Heart left ventricle (tissue), 16 donors: ENCODE measurements at regions of chr22 and their contacts with region 1.

Region 1: GRCh38 chr22:37077884-37078485 is 26.4 kb downstream of the KCTD17 start:
- DNase-seq: peak in 3 of 5 donors; percentile 41 to 81 (median 55)
- ATAC-seq: peak in 2 of 4 donors; percentile 44 to 49
- H3K4me3 ChIP-seq: no peak overlapping the region
- H3K27ac ChIP-seq: no peak overlapping the region
- H3K4me1 ChIP-seq: peaks cover 0 to 28% (median 0%) of the 10 kb centered on the region in 12 donors
- H3K27me3 ChIP-seq: peaks cover 0 to 35% (median 7%) of the 10 kb centered on the region in 9 donors
- CTCF ChIP-seq: peak; percentile 77 to 99 (median 92)
- POLR2A ChIP-seq: no peak

Region 2: DNA sequence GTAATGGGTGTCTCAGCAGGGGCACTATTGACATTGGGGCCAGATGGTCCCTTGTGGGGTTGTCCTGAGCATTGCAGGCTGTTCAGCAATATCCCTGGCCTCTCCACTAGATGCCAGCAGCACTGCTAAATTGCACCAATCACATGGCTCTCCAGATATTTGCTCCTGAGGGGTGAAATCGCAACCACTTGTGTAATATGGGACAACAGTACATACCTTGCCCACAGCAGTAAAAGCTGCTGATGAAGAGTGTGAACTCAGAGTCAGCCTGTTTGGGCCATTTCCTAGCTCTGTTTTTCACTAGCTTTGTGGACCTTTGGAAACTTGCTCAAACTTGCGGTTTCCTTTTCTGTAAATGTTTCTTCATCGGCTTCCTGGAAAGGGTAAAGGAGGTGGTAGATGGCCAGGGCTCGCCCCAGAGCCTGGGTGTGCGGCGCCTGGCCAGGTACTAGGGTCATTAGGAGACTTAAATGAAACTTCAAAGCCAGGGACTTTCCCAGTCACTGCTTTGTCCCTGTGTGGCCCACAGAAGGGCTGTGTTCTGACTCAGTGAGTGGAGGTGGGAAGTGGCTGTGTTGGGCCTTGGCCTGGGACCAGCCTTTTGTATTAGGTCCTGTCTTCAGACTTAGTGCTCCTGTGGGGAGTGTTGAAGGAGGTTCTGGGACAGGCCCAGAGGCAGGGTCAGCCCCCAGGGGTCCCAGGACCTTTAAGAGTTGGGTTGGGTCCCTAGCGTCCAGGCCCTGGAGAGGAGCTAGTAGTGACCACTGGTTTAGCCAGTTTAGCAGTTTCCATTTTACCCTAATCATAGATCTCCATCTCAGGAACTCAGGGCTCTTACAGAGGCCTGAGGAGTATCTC is 204.1 kb before region 1 on chr22:
- intact Hi-C with region 1: no loop called
- DNase-seq: peak in 3 of 5 donors; percentile 30 to 44 (median 32)
- ATAC-seq: peak; percentile 78 to 87 (median 84)
- H3K4me3 ChIP-seq: peak overlapping the region in 1 of 12 donors; percentile 2
- H3K27ac ChIP-seq: peak overlapping the region in 11 of 12 donors; percentile 3 to 87 (median 50)
- H3K4me1 ChIP-seq: peaks cover 0 to 25% (median 11%) of the 10 kb centered on the region in 12 donors
- H3K27me3 ChIP-seq: peaks cover 0 to 28% (median 4%) of the 10 kb centered on the region in 9 donors
- CTCF ChIP-seq: peak; percentile 20 to 58 (median 46)
- POLR2A ChIP-seq: no peak

Region 3: DNA sequence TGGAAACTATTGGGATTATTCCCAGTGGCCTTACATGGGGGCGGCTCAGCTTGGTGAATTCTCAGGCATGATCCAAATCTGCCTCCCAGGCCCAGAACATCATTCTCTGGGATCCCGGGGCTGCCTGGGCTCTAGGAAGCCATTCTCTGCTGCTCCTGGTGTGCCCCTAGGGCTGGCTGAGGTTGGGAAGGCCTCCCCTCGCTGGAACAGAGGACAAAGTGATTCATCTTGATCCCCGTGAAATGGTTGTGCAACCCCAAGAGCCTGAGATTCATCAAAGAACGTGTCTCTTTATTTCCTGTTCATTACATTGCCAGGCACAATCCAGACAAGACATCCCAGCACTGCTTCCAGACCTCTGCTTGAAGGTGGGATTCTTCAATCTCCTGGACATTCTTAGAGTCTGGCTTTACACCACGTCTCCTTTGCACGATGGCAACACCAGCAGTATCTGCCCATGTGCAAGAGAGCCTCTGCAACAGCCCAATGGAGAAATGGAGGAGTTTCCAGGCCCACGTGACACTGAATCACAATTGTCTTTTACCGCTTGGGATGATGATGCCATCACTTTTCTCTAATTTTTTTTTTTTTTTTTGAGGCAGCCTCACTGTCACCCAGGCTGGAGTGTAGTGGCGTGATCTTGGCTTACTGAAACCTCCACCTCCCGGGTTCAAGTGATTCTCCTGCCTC is 111.0 kb before region 1 on chr22:
- intact Hi-C with region 1: no loop called
- DNase-seq: no peak
- ATAC-seq: no peak
- H3K4me3 ChIP-seq: no peak overlapping the region
- H3K27ac ChIP-seq: no peak overlapping the region
- H3K4me1 ChIP-seq: no peaks in the 10 kb centered on the region
- H3K27me3 ChIP-seq: peaks cover 0 to 8% (median 0%) of the 10 kb centered on the region in 9 donors
- CTCF ChIP-seq: no peak
- POLR2A ChIP-seq: no peak

Region 4: DNA sequence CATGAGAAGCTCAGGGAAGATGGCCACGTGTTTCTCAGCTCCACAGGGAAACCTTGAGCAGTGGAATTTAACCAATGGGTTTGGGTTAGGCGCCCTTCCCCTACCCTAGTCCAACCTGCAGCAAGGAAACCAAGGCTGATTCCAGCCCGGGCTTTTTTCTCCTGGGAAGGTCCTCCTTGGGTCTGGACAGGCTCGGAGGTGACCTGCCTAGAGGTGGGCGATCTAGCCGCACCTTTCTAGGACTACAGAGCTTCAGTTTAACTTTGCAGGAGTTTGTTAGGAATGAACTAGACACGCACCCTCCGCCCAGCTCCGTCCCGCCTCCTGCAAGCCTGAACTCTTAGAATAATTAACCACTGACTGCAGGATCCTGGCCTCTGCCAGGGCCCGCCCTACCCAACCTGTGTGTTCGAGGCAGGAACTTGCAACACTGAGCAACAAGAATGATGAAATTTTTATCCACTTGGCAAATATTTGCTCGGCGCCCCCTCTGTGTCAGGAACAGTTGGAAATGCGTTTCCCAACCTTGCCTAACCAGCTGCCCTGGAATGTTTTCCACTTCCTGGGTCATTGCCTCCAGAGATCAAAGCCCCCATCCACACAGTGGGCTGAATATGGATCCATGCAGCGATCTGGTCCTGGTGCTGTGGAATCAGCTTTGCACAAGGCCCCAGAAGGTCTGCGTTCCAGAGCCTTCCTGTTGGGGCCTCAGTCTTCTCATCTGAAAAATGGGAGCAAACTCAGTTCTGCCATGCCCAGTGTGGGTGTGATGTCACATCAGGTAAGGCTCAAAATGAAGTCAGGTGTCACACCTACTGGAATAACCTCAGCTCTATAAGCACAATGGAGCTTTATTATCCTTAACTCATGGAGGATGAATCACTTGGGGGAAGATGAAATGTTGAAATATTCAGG is 45.2 kb before region 1 on chr22:
- intact Hi-C with region 1: no loop called
- DNase-seq: no peak
- ATAC-seq: peak in 2 of 4 donors; percentile 35 to 45
- H3K4me3 ChIP-seq: no peak overlapping the region
- H3K27ac ChIP-seq: no peak overlapping the region
- H3K4me1 ChIP-seq: no peaks in the 10 kb centered on the region
- H3K27me3 ChIP-seq: peaks cover 0 to 14% (median 0%) of the 10 kb centered on the region in 9 donors
- CTCF ChIP-seq: no peak
- POLR2A ChIP-seq: no peak

Region 5: GRCh38 chr22:37154925-37155712 is 77.1 kb after region 1 on chr22:
- intact Hi-C with region 1: loop called in 5 of 10 experiments (anchors 5 to 10 kb)
- DNase-seq: no peak
- ATAC-seq: no peak
- H3K4me3 ChIP-seq: no peak overlapping the region
- H3K27ac ChIP-seq: no peak overlapping the region
- H3K4me1 ChIP-seq: no peaks in the 10 kb centered on the region
- H3K27me3 ChIP-seq: peaks cover 0 to 24% (median 0%) of the 10 kb centered on the region in 9 donors
- CTCF ChIP-seq: no peak
- POLR2A ChIP-seq: no peak

Region 6: GRCh38 chr22:37166675-37167066 is 88.7 kb after region 1 on chr22:
- intact Hi-C with region 1: loop called in 3 of 10 experiments (anchors 5 to 10 kb)
- DNase-seq: peak; percentile 83 to 93 (median 89)
- ATAC-seq: peak; percentile 90 to 97 (median 93)
- H3K4me3 ChIP-seq: peak overlapping the region in 4 of 12 donors; percentile 13 to 43 (median 24)
- H3K27ac ChIP-seq: peak overlapping the region in 7 of 12 donors; percentile 2 to 71 (median 25)
- H3K4me1 ChIP-seq: peaks cover 0 to 31% (median 13%) of the 10 kb centered on the region in 12 donors
- H3K27me3 ChIP-seq: peaks cover 0 to 4% (median 0%) of the 10 kb centered on the region in 9 donors
- CTCF ChIP-seq: peak; percentile 86 to 98 (median 92)
- POLR2A ChIP-seq: no peak

Region 7: GRCh38 chr22:37199103-37199759 is 121.2 kb after region 1 on chr22:
- intact Hi-C with region 1: loop called (anchors 1 to 5 kb)
- DNase-seq: peak; percentile 97 to 100 (median 98)
- ATAC-seq: peak; percentile 87 to 93 (median 90)
- H3K4me3 ChIP-seq: peak overlapping the region; percentile 35 to 87 (median 66)
- H3K27ac ChIP-seq: peak overlapping the region; percentile 83 to 99 (median 96)
- H3K4me1 ChIP-seq: peaks cover 19 to 47% (median 34%) of the 10 kb centered on the region in 12 donors
- H3K27me3 ChIP-seq: no peaks in the 10 kb centered on the region
- CTCF ChIP-seq: peak; percentile 90 to 99 (median 96)
- POLR2A ChIP-seq: peak; percentile 70 to 97

Region 8: DNA sequence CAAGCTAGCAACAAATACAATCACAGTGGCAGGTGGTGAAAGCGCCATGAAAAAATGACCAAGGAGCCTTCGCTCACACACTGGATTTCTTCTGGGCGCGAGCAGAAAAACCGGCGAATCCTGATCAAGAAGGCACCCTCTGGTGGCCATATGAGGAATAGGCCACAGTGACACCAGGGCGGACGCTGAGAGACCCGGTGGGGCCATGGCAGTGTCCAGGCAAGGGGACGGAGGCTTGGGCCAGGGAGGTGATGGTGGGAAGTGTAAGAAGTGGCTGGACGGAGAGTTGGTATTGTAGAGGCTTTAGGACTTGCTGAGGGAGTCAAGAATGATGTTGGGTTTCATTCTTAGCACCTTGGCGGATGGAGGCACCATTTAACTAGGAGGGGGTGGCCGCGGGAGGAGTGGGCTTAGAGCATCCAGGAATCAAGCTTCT is 182.9 kb after region 1 on chr22:
- intact Hi-C with region 1: loop called in 1 of 10 experiments (anchors 1 kb)
- DNase-seq: peak; percentile 32 to 78 (median 57)
- ATAC-seq: peak; percentile 37 to 78 (median 69)
- H3K4me3 ChIP-seq: no peak overlapping the region
- H3K27ac ChIP-seq: no peak overlapping the region
- H3K4me1 ChIP-seq: peaks cover 0 to 21% (median 2%) of the 10 kb centered on the region in 12 donors
- H3K27me3 ChIP-seq: peaks cover 4 to 76% (median 26%) of the 10 kb centered on the region in 9 donors
- CTCF ChIP-seq: peak; percentile 69 to 93 (median 86)
- POLR2A ChIP-seq: no peak